ENCODE measurements at regions of chr9 and their contacts with region 1.

Region 1: DNA sequence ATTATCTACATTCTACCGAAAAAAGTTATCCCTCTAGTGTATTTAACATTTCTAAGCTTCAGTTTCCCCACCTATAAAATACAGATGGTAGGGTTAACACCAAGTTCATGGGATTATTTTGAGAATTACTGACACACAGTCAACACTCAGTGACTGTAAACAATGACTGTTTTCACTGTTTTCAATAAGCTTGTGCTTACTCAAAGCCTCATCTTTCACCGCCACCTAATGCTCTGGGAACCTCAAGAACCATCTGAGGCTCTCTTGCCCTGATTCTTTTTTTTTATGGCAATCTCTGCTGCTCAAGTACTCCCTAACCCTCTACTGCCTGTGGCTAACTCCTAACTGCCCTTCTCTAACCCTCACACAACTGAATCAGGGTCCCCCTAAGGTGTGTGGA is 59.6 kb downstream of the SETX start:
- H3K4me3 Mint-ChIP-seq: no peak overlapping the region
- H3K27ac Mint-ChIP-seq: no peak overlapping the region
- H3K4me1 Mint-ChIP-seq: no peaks in the 10 kb centered on the region
- H3K27me3 Mint-ChIP-seq: no peaks in the 10 kb centered on the region

Region 2: GRCh38 chr9:132235946-132236661 is 59.1 kb before region 1 on chr9:
- intact Hi-C with region 1: no loop called
- H3K4me3 Mint-ChIP-seq: no peak overlapping the region
- H3K27ac Mint-ChIP-seq: no peak overlapping the region
- H3K4me1 Mint-ChIP-seq: peaks cover 36% of the 10 kb centered on the region
- H3K27me3 Mint-ChIP-seq: peaks cover 44% of the 10 kb centered on the region

Region 3: GRCh38 chr9:132333556-132333955 is 38.4 kb after region 1 on chr9:
- intact Hi-C with region 1: loop called (anchors 5 kb)
- H3K4me3 Mint-ChIP-seq: no peak overlapping the region
- H3K27ac Mint-ChIP-seq: no peak overlapping the region
- H3K4me1 Mint-ChIP-seq: peaks cover 5% of the 10 kb centered on the region
- H3K27me3 Mint-ChIP-seq: no peaks in the 10 kb centered on the region